Activated CD8-positive, alpha-beta memory T cell treated with anti-CD3 and anti-CD28 coated beads, Interleukin-2, amount 10 ng/mL, durations not matched to agents 7 days and 5 days (primary cell): ENCODE measurements at regions of chr10 and their contacts with region 1.

Region 1: GRCh38 chr10:7525314-7526016 is 114.6 kb upstream of the SFMBT2 start:
- DNase-seq: peak; percentile 80
- ATAC-seq: peak; percentile 92
- H3K4me3 Mint-ChIP-seq: no peak overlapping the region
- H3K27ac Mint-ChIP-seq: no peak overlapping the region
- H3K4me1 Mint-ChIP-seq: peaks cover 38% of the 10 kb centered on the region
- H3K27me3 Mint-ChIP-seq: peaks cover 27% of the 10 kb centered on the region

Region 2: DNA sequence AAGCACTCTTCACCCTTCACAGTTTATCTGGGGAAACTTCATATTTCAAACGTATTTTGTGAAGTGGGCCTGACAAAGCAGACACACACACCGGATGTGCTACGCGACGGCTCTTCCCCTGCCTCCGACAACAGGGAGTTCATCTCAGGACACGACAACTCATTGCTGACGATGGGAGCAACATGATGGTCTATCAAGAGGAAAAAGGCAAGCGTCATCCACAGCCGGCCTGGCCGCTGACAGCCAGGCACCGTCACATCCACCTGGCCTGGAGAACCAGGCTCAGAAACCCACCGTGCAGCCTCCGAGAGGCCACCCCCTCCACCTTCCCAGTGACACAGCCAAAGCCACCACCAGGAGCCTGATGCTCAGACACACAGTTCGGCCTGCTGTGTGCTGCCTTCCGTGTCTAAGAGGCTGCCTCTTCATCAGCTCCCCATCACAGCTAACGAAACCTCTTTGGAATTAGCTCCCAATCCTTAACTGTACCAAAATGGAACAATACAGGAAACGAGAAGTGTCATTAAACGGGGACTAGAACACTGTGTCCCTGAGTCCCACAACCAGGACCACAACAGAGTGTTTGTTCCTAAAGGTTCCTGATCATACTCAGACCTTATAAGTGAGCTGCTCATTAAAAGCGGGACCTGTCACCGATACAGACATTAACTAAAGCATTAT is 191.4 kb before region 1 on chr10:
- CTCF ChIA-PET with region 1: no interaction called
- DNase-seq: no peak
- ATAC-seq: no peak
- H3K4me3 Mint-ChIP-seq: no peak overlapping the region
- H3K27ac Mint-ChIP-seq: no peak overlapping the region
- H3K4me1 Mint-ChIP-seq: peaks cover 39% of the 10 kb centered on the region
- H3K27me3 Mint-ChIP-seq: no peaks in the 10 kb centered on the region

Region 3: DNA sequence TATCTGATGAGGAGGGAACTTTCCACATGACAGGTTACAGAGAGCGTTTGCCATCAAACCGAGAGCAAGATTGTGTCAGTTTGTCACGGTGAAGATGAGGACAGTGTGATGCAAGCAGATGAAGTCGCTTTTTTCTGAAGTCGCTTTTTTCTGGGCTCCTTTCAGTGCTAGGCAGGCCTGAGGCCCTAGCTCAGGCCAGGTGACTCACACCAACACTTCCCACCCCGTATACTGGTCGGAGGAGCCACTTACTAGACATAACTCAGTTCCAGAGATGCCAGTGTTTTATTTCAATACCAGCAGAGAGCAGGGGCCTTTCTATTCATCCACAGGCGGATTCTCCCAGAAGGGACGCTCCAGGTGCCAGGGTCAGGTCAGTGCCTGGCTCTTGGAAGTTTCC is 173.6 kb before region 1 on chr10:
- CTCF ChIA-PET with region 1: no interaction called
- DNase-seq: no peak
- ATAC-seq: no peak
- H3K4me3 Mint-ChIP-seq: no peak overlapping the region
- H3K27ac Mint-ChIP-seq: no peak overlapping the region
- H3K4me1 Mint-ChIP-seq: peaks cover 1% of the 10 kb centered on the region
- H3K27me3 Mint-ChIP-seq: no peaks in the 10 kb centered on the region

Region 4: DNA sequence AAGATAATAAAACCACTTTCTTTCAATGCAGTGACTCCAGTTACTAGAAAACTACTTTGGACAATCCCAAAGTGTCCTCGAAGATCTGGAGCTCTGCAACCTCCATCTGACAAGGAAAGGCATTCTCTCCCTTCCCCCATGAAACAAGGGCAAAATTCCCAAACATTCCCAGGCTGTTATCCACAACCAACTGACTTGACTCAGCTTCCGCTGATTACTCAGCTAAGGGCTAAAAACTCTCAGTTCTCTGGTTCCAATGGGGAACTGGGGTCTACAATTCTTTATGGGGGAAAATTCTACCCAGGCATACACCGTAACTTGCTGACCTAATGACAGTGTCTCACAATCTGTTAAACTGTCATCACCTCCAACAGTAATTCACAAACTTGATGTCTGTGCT is 163.0 kb before region 1 on chr10:
- CTCF ChIA-PET with region 1: no interaction called
- DNase-seq: no peak
- ATAC-seq: no peak
- H3K4me3 Mint-ChIP-seq: no peak overlapping the region
- H3K27ac Mint-ChIP-seq: no peak overlapping the region
- H3K4me1 Mint-ChIP-seq: peaks cover 14% of the 10 kb centered on the region
- H3K27me3 Mint-ChIP-seq: no peaks in the 10 kb centered on the region

Region 5: DNA sequence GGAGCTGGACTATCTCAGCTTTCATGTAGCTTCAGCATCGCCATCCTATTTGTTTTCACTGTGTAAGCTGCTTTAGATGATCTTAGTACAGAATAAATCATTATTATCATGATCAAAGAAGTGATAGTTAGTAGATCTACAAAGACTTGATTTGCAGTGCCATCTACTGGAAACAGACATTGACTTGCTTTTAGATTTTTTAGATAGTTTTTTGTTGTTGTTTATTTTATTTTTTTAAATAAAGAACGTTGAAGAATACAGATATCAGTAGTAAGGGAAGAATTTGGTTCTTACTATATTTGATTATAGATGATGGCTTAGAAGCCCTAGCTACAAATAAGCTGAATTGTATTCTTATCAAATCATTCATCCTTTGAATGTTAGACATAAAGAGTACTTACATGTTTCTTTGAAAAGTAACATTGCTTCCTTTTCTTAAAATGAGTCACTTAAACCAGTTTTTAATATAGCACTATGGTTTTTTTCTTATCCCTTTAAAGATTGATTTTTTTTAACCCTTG is 108.3 kb before region 1 on chr10:
- CTCF ChIA-PET with region 1: interaction called, 13 read pairs
- DNase-seq: no peak
- ATAC-seq: peak; percentile 63
- H3K4me3 Mint-ChIP-seq: no peak overlapping the region
- H3K27ac Mint-ChIP-seq: peak overlapping the region; percentile 71
- H3K4me1 Mint-ChIP-seq: peaks cover 50% of the 10 kb centered on the region
- H3K27me3 Mint-ChIP-seq: peaks cover 27% of the 10 kb centered on the region

Region 6: DNA sequence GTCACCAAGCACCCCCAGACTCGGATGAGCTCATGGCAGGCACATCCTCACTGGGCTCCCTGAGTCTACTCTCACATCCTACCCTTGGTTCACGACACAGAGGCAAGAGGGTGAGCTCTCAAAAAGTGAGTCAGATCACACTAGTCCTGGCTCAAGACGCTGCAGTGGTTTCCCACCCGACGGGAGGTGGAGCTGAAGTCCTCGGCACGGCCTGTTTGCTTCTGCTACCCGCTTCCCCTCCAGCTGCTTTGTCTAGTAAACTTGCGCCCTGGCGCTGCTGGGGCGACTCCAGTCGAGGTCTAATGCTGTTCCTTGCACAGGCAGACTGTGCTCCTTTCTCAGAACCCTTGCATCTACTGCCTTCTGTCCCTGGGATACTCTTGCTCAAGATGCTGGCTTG is 101.2 kb before region 1 on chr10:
- CTCF ChIA-PET with region 1: interaction called, 16 read pairs
- DNase-seq: peak; percentile 79
- ATAC-seq: peak; percentile 94
- H3K4me3 Mint-ChIP-seq: no peak overlapping the region
- H3K27ac Mint-ChIP-seq: peak overlapping the region; percentile 21
- H3K4me1 Mint-ChIP-seq: peaks cover 34% of the 10 kb centered on the region
- H3K27me3 Mint-ChIP-seq: peaks cover 8% of the 10 kb centered on the region

Region 7: DNA sequence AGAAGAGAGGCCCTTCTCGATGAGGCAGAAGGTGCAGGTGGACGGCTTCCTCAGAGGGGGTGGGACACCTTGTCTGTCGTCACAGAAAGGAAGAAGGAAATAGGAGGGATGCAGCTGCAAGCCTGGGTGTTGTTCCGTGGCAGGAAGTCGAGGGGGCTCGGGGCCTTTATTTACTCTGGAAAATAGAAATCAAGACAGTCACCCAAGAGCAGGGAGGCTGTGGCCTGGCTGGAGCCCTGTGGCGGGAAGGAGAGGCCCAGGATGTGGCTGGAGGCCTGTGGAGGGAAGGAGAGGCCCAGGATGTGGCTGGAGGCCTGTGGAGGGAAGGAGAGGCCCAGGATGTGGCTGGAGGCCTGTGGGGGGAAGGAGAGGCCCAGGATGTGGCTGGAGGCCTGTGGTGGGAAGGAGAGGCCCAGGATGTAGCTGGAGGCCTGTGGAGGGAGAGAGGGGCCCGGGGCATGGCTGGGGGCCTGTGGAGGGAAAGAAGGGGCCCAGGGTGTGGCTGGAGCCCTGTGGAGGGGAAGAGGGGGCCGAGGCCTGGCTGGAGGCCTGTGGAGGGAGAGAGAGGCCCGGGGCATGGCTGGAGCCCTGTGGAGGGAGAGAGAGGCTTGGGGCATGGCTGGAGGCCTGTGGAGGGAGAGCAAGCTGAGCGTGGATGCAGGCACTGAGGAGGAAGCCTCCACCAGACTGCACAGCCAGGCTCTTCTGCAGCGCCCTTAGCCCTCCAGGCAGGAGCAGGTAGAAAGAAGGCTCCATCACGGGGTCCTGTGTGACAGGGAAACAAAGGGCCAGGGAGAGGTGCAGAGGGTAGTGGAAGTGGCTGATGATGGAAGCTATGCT is 17.4 kb before region 1 on chr10:
- CTCF ChIA-PET with region 1: interaction called, 31 read pairs
- DNase-seq: peak; percentile 89
- ATAC-seq: peak; percentile 79
- H3K4me3 Mint-ChIP-seq: peak overlapping the region; percentile 41
- H3K27ac Mint-ChIP-seq: peak overlapping the region; percentile 96
- H3K4me1 Mint-ChIP-seq: peaks cover 71% of the 10 kb centered on the region
- H3K27me3 Mint-ChIP-seq: peaks cover 4% of the 10 kb centered on the region

Region 8: DNA sequence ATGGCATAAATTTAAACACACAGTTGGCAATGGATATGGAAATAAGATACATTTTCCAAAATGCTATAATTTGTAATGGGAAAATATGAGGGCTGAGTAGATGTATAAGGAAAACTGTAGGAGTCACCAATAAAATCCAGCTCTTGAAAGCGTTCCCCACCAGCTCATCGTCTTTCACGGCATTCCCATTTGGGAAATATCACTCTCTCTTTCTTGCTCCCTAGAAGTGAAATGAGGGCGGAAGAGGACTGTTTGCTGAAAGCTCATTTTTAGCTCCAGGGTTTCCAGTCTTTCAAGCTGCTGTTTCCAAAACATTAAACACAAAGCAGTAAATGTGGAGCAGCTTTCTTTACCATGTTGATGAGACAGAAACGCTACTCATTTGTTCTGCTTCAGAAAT is 10.0 kb before region 1 on chr10:
- CTCF ChIA-PET with region 1: interaction called, 31 read pairs
- DNase-seq: no peak
- ATAC-seq: no peak
- H3K4me3 Mint-ChIP-seq: no peak overlapping the region
- H3K27ac Mint-ChIP-seq: no peak overlapping the region
- H3K4me1 Mint-ChIP-seq: peaks cover 27% of the 10 kb centered on the region
- H3K27me3 Mint-ChIP-seq: peaks cover 5% of the 10 kb centered on the region

Region 9: DNA sequence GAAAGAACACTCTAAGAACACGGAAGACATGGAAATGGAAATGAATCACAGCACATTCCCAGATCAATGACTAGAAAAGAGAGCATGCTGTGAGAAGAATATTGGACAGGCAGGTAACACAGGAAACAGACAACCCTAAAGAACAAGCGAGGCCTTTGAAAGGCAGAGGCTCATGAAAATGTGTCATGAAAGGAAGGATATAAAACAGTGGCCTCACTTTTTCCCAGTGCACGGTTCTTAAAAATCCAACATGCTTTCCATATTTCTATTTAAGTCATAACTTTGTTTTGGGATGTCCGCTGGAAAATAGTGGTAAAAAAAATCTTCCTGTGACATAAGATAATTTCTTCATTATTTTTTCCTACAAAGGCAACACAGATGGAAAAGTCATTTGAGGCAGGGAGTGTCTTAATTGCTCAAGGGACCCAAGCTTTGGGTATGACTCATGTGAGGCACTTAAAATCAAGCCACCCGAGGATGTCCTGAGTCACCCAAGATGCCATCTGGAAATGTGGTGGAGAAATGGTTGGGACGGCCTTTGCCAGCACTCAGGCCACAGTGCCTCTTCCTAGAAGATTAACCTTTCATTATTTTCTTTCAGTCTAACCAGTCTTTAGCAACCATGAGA is 124.3 kb after region 1 on chr10:
- CTCF ChIA-PET with region 1: no interaction called
- DNase-seq: no peak
- ATAC-seq: no peak
- H3K4me3 Mint-ChIP-seq: no peak overlapping the region
- H3K27ac Mint-ChIP-seq: no peak overlapping the region
- H3K4me1 Mint-ChIP-seq: no peaks in the 10 kb centered on the region
- H3K27me3 Mint-ChIP-seq: peaks cover 31% of the 10 kb centered on the region

Region 10: DNA sequence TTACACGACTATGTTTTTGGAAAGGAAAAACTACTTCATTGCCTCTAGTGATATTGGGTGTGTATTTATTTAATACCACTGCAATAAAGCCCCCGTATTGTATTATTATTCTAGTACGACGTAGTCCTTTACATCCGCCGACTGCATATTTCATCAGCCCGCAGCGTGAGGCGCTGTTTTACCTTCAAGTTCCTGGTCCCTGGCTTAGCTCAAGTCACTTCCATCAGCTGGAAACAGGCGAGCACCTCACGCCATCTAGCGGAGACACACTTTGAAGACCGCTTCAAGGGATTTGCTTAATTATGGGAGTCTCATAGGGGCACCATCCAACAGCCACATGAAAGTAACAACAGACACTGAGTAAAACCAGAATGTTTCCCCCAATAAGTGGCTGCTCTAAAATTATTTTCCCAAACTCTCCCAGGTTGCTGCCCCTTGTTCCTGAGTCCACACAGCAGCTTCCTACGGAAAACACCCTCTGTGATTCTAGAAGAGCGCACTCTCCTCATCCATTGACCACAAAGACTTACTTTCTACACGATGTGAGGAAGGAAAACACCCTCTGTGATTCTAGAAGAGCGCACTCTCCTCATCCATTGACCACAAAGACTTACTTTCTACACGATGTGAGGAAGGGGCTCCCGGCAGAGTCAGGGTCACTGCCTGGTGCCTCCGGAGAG is 161.9 kb after region 1 on chr10:
- CTCF ChIA-PET with region 1: interaction called, 105 read pairs
- DNase-seq: peak; percentile 90
- ATAC-seq: peak; percentile 99
- H3K4me3 Mint-ChIP-seq: no peak overlapping the region
- H3K27ac Mint-ChIP-seq: no peak overlapping the region
- H3K4me1 Mint-ChIP-seq: peaks cover 9% of the 10 kb centered on the region
- H3K27me3 Mint-ChIP-seq: peaks cover 19% of the 10 kb centered on the region

Region 11: GRCh38 chr10:7818295-7819122 is 293.0 kb after region 1 on chr10 and contains the start of gene TAF3:
- CTCF ChIA-PET with region 1: interaction called, 13 read pairs
- DNase-seq: peak; percentile 95
- ATAC-seq: peak; percentile 88
- H3K4me3 Mint-ChIP-seq: peak within 1 kb of the TSS; percentile 99
- H3K27ac Mint-ChIP-seq: peak within 1 kb of the TSS; percentile 89
- H3K4me1 Mint-ChIP-seq: peaks cover 35% of the 10 kb centered on the region
- H3K27me3 Mint-ChIP-seq: no peaks in the 10 kb centered on the region
- total RNA-seq, gene TAF3: 15.6 to 15.8 TPM